A673 (cell line): ENCODE measurements at regions of chr1 and their contacts with region 1.

Region 1: DNA sequence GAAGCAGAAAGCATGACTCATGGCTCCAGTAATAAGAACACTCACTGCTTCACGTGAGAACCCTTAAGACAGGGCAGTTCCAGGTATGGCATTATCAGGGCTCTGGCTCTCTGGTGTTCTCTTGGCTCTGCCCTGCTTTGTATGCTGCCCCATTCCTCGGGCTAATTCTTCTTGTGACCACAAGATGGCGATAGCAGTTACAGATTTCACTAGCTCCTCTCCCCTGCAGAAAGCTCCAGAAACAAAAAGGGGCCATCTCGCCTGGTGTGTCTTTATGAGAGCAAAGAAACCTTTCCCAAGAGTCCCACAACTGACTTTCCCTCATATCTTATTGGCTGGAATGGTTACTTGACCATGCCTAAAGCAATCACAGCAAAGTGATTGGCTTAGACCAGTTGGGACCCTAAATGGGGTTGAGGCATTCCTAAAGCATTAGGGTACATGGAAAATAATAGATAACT is 60.1 kb downstream of the F3 start:
- DNase-seq: peak; percentile 83
- H3K4me3 ChIP-seq: no peak overlapping the region
- H3K27ac ChIP-seq: no peak overlapping the region
- H3K4me1 ChIP-seq: no peaks in the 10 kb centered on the region
- H3K27me3 ChIP-seq: no peaks in the 10 kb centered on the region
- CTCF ChIP-seq: peak; percentile 86

Region 2: DNA sequence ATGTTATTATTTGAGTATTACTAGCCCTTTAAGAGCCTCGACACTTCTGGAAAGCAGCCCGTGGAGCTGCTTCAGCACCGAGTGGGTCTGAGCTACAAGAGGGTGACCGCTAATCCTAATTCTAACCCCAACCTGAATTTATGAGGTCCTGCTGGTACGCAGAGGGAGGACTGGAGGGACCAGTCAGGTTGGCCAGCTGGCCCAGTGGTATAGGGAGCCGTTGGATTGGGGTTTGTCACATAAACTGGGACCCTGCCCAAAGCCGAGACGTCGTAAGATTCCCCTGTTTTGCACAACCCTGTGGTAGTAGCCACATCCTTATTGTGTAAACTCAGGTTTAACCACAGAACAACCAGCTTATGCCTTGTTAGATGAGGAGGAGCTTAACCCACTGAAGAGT is 120.8 kb after region 1 on chr1:
- CTCF ChIA-PET with region 1: interaction called, 11 read pairs
- POLR2A ChIA-PET with region 1: no interaction called
- intact Hi-C with region 1: no loop called
- DNase-seq: no peak
- H3K4me3 ChIP-seq: no peak overlapping the region
- H3K27ac ChIP-seq: no peak overlapping the region
- H3K4me1 ChIP-seq: peaks cover 9% of the 10 kb centered on the region
- H3K27me3 ChIP-seq: no peaks in the 10 kb centered on the region
- CTCF ChIP-seq: no peak